ENCODE measurements at regions of chr3 and their contacts with region 1.

Region 1: GRCh38 chr3:112734718-112735350 is 93.9 kb upstream of the CCDC80 start:
- DNase-seq: peak; percentile 78
- ATAC-seq: peak; percentile 57
- H3K4me3 Mint-ChIP-seq: no peak overlapping the region
- H3K27ac Mint-ChIP-seq: no peak overlapping the region
- H3K4me1 Mint-ChIP-seq: peaks cover 48% of the 10 kb centered on the region
- H3K27me3 Mint-ChIP-seq: no peaks in the 10 kb centered on the region

Region 2: DNA sequence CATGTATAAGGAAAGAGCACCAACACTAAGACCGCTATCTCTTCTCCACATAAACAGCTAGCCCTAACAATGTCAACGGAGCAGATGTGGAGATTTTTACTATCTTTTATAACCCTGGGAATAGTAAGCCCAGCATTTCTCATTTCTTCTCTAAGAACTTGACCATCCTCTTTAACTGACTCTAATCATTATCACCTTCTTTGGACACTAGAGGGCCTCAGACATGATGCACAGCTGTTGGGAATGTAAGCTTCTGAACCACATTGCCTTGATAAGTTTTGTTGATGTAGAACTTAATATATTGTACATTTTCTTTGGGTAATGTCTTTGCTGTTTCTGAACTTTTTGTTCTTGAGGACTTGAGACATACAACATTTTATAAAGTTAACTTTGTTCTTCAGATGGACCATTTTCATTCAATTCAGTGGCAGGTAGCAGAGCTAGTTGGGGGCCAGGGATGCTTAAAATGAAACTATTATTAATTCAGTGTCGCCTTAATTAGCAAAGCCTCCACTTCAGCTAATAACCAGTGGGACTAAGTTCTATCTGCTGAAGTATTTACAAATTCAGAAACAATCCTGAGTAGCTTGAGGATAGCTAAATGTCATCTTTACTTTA is 745.7 kb before region 1 on chr3:
- CTCF ChIA-PET with region 1: no interaction called
- POLR2A ChIA-PET with region 1: no interaction called
- intact Hi-C with region 1: no loop called
- DNase-seq: no peak
- ATAC-seq: peak; percentile 69
- H3K4me3 Mint-ChIP-seq: no peak overlapping the region
- H3K27ac Mint-ChIP-seq: no peak overlapping the region
- H3K4me1 Mint-ChIP-seq: peaks cover 36% of the 10 kb centered on the region
- H3K27me3 Mint-ChIP-seq: no peaks in the 10 kb centered on the region

Region 3: GRCh38 chr3:112582244-112582874 is 152.5 kb before region 1 on chr3:
- CTCF ChIA-PET with region 1: interaction called, 6 read pairs
- POLR2A ChIA-PET with region 1: no interaction called
- intact Hi-C with region 1: loop called in 1 of 2 experiments (anchors 2 kb)
- DNase-seq: peak; percentile 65
- ATAC-seq: peak; percentile 69
- H3K4me3 Mint-ChIP-seq: no peak overlapping the region
- H3K27ac Mint-ChIP-seq: no peak overlapping the region
- H3K4me1 Mint-ChIP-seq: peaks cover 9% of the 10 kb centered on the region
- H3K27me3 Mint-ChIP-seq: no peaks in the 10 kb centered on the region

Region 4: GRCh38 chr3:112676659-112677234 is 58.1 kb before region 1 on chr3:
- CTCF ChIA-PET with region 1: interaction called, 4 read pairs
- POLR2A ChIA-PET with region 1: interaction called, 3 read pairs
- intact Hi-C with region 1: loop called (anchors 1 to 2 kb)
- DNase-seq: peak; percentile 94
- ATAC-seq: peak; percentile 98
- H3K4me3 Mint-ChIP-seq: no peak overlapping the region
- H3K27ac Mint-ChIP-seq: peak overlapping the region; percentile 27
- H3K4me1 Mint-ChIP-seq: peaks cover 41% of the 10 kb centered on the region
- H3K27me3 Mint-ChIP-seq: peaks cover 19% of the 10 kb centered on the region

Region 5: GRCh38 chr3:112814266-112814665 is 79.4 kb after region 1 on chr3:
- CTCF ChIA-PET with region 1: interaction called, 10 read pairs
- POLR2A ChIA-PET with region 1: no interaction called
- intact Hi-C with region 1: loop called (anchors 2 kb)
- DNase-seq: no peak
- ATAC-seq: no peak
- H3K4me3 Mint-ChIP-seq: no peak overlapping the region
- H3K27ac Mint-ChIP-seq: no peak overlapping the region
- H3K4me1 Mint-ChIP-seq: peaks cover 10% of the 10 kb centered on the region
- H3K27me3 Mint-ChIP-seq: no peaks in the 10 kb centered on the region

Region 6: GRCh38 chr3:112990672-112991602 is 256.1 kb after region 1 on chr3 and contains the start of gene GTPBP8:
- CTCF ChIA-PET with region 1: interaction called, 19 read pairs
- POLR2A ChIA-PET with region 1: no interaction called
- intact Hi-C with region 1: no loop called
- DNase-seq: peak; percentile 95
- ATAC-seq: peak; percentile 96
- H3K4me3 Mint-ChIP-seq: peak within 1 kb of the TSS; percentile 81
- H3K27ac Mint-ChIP-seq: peak within 1 kb of the TSS; percentile 94
- H3K4me1 Mint-ChIP-seq: peaks cover 70% of the 10 kb centered on the region
- H3K27me3 Mint-ChIP-seq: no peaks in the 10 kb centered on the region
- total RNA-seq, gene GTPBP8: 34.3 to 43.0 TPM

Region 7: GRCh38 chr3:113211330-113212149 is 476.7 kb after region 1 on chr3 and contains the start of gene BOC:
- CTCF ChIA-PET with region 1: no interaction called
- POLR2A ChIA-PET with region 1: no interaction called
- intact Hi-C with region 1: no loop called
- DNase-seq: peak; percentile 43
- ATAC-seq: peak; percentile 47
- H3K4me3 Mint-ChIP-seq: peak within 1 kb of the TSS; percentile 77
- H3K27ac Mint-ChIP-seq: peak within 1 kb of the TSS; percentile 15
- H3K4me1 Mint-ChIP-seq: peaks cover 13% of the 10 kb centered on the region
- H3K27me3 Mint-ChIP-seq: peaks cover 74% of the 10 kb centered on the region
- total RNA-seq, gene BOC: 0.40 to 0.43 TPM

Region 8: GRCh38 chr3:113287803-113288648 is 553.2 kb after region 1 on chr3:
- CTCF ChIA-PET with region 1: interaction called, 3 read pairs
- POLR2A ChIA-PET with region 1: no interaction called
- intact Hi-C with region 1: loop called (anchors 2 to 5 kb)
- DNase-seq: peak; percentile 67
- ATAC-seq: no peak
- H3K4me3 Mint-ChIP-seq: no peak overlapping the region
- H3K27ac Mint-ChIP-seq: no peak overlapping the region
- H3K4me1 Mint-ChIP-seq: peaks cover 6% of the 10 kb centered on the region
- H3K27me3 Mint-ChIP-seq: no peaks in the 10 kb centered on the region

Measured in activated CD4-positive, alpha-beta T cell treated with anti-CD3 and anti-CD28 coated beads for 36 hours (primary cell).